Right cardiac atrium (tissue), 5 donors: ENCODE measurements at regions of chr3 and their contacts with region 1.

Region 1: DNA sequence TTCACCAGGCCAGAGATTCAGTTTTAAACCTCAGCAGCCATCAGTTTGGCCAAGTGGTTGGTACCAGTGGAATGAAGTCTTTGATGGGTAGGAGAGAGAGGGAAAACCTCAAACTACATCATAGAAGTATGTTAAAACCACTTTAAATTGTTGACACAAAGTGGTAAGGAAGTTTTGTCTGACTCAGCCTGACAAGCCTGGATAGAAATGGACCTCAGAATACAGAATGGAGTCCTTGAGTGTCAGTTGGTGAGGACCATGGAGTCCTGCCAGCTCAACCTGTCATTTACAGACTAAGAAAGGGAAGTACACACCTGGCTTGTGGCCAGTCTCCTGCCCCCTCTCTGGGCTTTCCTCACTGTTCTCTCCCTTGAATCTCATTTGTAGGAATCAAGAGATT is 12.1 kb downstream of the EAF1 start:
- DNase-seq: no peak
- ATAC-seq: no peak
- H3K4me3 ChIP-seq: no peak overlapping the region
- H3K27ac ChIP-seq: no peak overlapping the region
- H3K4me1 ChIP-seq: no peaks in the 10 kb centered on the region
- H3K27me3 ChIP-seq: no peaks in the 10 kb centered on the region

Region 2: DNA sequence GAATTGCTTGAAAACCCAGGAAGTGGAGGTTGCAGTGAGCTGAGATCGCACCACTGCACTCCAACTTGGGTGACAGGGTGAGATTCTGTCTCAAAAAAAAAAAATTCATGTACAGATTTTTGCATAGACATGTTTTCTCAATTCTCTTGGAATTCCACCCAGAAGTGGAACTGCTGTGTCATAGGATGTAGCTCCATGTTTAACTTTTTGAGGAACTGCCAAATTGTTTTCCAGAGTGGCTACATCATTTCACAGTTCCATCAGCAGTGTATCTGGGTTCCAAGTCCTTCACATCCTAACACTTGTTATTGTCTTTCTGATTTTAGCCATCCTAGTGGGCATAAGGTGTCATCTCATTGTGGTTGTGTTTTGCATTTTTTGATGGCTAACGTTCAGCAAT is 223.5 kb before region 1 on chr3:
- intact Hi-C with region 1: no loop called
- DNase-seq: no peak
- ATAC-seq: no peak
- H3K4me3 ChIP-seq: no peak overlapping the region
- H3K27ac ChIP-seq: no peak overlapping the region
- H3K4me1 ChIP-seq: peaks cover 3% of the 10 kb centered on the region
- H3K27me3 ChIP-seq: no peaks in the 10 kb centered on the region

Region 3: GRCh38 chr3:15557511-15557946 is 118.1 kb after region 1 on chr3:
- intact Hi-C with region 1: loop called in 2 of 4 experiments (anchors 10 kb)
- DNase-seq: peak in 1 of 3 donors; percentile 47
- ATAC-seq: peak; percentile 74 to 87
- H3K4me3 ChIP-seq: no peak overlapping the region
- H3K27ac ChIP-seq: no peak overlapping the region
- H3K4me1 ChIP-seq: no peaks in the 10 kb centered on the region
- H3K27me3 ChIP-seq: no peaks in the 10 kb centered on the region

Region 4: DNA sequence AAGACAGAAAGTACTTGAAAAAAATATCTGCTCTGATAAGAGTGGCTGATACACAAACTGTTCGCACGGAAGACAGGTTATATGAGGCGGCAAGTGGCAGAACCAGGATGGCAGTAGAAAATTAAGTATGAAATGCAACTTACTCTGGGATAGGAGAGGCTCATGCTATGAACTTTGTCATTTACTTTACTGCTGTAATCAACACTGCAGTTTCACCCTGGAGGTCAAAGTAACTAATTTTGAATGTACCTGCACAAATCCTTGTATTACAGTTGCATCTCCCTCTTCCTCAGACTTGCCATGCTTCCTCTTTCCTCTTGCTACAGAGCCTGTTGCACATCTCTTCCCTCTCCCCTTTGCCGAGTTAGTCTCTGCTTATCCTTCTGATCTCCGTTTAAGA is 123.1 kb after region 1 on chr3:
- intact Hi-C with region 1: loop called in 2 of 4 experiments (anchors 10 kb)
- DNase-seq: no peak
- ATAC-seq: no peak
- H3K4me3 ChIP-seq: no peak overlapping the region
- H3K27ac ChIP-seq: no peak overlapping the region
- H3K4me1 ChIP-seq: no peaks in the 10 kb centered on the region
- H3K27me3 ChIP-seq: no peaks in the 10 kb centered on the region